Ovary (tissue), 10 donors: ENCODE measurements at regions of chr1 and their contacts with region 1.

Region 1: GRCh38 chr1:35882945-35883634 is at the start of gene AGO1:
- DNase-seq: peak; percentile 94 to 96 (median 96)
- H3K4me3 ChIP-seq: peak within 1 kb of the TSS; percentile 99
- H3K27ac ChIP-seq: peak within 1 kb of the TSS; percentile 67 to 72
- H3K4me1 ChIP-seq: peaks cover 4% of the 10 kb centered on the region
- H3K27me3 ChIP-seq: no peaks in the 10 kb centered on the region
- CTCF ChIP-seq: peak; percentile 96 to 98 (median 97)
- EP300 ChIP-seq: no peak
- POLR2A ChIP-seq: peak; percentile 59
- total RNA-seq, gene AGO1: 10.1 to 34.0 (median 29.8) TPM

Region 2: DNA sequence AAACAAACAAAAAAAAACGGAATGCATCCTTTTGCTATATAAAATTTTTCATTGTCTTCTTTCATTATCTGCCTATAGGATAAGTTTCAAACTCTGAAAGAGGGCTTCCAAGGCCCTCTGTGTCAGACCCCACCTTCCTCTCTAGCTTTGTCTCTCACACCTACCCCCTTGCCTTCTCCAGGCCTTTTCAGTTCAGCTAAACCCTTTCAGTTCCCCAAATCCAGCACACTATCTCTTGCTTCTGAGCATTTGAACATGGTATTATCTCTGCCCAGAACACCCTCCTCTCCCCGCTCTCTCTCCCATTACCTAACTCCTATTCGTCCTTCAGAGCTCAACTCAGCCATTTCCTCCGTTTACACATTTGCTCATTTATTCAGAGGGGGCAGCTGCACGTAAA is 200.1 kb before region 1 on chr1:
- intact Hi-C with region 1: no loop called
- DNase-seq: no peak
- H3K4me3 ChIP-seq: no peak overlapping the region
- H3K27ac ChIP-seq: no peak overlapping the region
- H3K4me1 ChIP-seq: no peaks in the 10 kb centered on the region
- H3K27me3 ChIP-seq: no peaks in the 10 kb centered on the region
- CTCF ChIP-seq: no peak
- EP300 ChIP-seq: no peak
- POLR2A ChIP-seq: no peak

Region 3: GRCh38 chr1:35925741-35926140 is 42.7 kb after region 1 on chr1:
- intact Hi-C with region 1: no loop called
- DNase-seq: peak in 4 of 5 donors; percentile 22 to 45 (median 34)
- H3K4me3 ChIP-seq: no peak overlapping the region
- H3K27ac ChIP-seq: no peak overlapping the region
- H3K4me1 ChIP-seq: no peaks in the 10 kb centered on the region
- H3K27me3 ChIP-seq: no peaks in the 10 kb centered on the region
- CTCF ChIP-seq: no peak
- EP300 ChIP-seq: no peak
- POLR2A ChIP-seq: no peak

Region 4: DNA sequence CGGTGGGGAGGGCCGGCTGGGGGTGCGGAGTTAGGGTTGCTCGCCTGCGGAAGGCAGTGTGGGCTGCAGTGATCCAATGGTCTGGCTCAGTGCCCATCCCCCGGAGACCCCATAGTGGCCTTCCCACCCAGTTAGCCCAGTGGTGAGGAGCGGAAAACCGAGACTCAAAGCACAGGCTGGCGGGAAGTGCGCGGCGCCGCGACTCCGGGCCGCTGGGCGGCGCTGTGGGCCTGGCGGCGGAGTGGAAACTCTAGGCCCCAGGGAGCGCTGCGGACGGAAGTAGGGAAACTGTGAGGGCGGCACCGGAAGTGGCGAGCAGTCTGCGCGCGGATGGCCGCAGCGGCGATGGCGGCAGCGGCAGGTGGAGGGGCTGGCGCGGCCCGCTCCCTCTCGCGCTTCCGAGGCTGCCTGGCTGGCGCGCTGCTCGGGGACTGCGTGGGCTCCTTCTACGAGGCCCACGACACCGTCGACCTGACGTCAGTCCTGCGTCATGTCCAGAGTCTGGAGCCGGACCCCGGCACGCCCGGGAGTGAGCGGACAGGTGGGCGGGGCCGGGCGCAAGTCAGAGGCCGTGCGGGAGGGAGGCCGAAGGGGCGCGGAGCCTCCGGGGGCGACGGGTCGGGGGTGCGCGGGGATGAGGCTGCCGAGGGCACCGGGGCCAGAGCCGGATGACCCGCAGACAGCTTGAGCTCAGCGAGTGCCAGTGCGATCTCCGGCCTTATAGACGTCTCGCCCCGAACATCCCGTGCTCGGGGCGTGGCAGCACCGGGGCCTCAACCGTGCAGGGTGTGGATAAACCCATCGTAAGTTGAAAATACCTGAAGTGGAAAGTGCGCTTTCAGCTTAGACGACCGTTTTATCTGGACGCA is 205.7 kb after region 1 on chr1 and contains the start of gene ADPRS:
- intact Hi-C with region 1: loop called in 1 of 4 experiments (anchors 5 kb)
- DNase-seq: peak; percentile 85 to 93 (median 87)
- H3K4me3 ChIP-seq: peak within 1 kb of the TSS; percentile 98
- H3K27ac ChIP-seq: peak within 1 kb of the TSS; percentile 75 to 84
- H3K4me1 ChIP-seq: peaks cover 11% of the 10 kb centered on the region
- H3K27me3 ChIP-seq: no peaks in the 10 kb centered on the region
- CTCF ChIP-seq: peak; percentile 99 to 100 (median 99)
- EP300 ChIP-seq: no peak
- POLR2A ChIP-seq: peak; percentile 92
- total RNA-seq, gene ADPRS: 21.0 to 52.2 (median 27.4) TPM

Region 5: DNA sequence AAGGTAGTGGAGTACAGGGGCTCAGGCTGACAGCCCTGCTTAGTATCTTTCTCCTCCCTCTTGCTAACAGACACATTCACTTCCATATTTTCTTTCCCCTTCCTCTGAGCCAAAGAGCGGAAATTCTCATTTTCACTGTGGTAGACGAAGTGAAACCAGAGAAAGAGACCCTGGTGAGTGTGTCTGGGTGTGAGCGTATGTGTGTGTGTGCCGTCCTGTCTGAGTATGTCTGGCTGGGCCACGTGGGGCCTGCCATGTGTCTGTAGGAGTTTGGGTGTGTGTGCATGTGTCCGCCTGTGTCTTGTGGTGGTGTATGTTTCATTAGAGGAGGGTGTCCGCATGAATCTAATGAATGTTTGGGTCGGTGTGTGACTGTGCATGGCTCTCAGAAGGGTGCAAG is 240.3 kb after region 1 on chr1:
- intact Hi-C with region 1: no loop called
- DNase-seq: no peak
- H3K4me3 ChIP-seq: no peak overlapping the region
- H3K27ac ChIP-seq: no peak overlapping the region
- H3K4me1 ChIP-seq: peaks cover 6% of the 10 kb centered on the region
- H3K27me3 ChIP-seq: no peaks in the 10 kb centered on the region
- CTCF ChIP-seq: no peak
- EP300 ChIP-seq: no peak
- POLR2A ChIP-seq: no peak